ENCODE measurements at regions of chr11 and their contacts with region 1.

Region 1: DNA sequence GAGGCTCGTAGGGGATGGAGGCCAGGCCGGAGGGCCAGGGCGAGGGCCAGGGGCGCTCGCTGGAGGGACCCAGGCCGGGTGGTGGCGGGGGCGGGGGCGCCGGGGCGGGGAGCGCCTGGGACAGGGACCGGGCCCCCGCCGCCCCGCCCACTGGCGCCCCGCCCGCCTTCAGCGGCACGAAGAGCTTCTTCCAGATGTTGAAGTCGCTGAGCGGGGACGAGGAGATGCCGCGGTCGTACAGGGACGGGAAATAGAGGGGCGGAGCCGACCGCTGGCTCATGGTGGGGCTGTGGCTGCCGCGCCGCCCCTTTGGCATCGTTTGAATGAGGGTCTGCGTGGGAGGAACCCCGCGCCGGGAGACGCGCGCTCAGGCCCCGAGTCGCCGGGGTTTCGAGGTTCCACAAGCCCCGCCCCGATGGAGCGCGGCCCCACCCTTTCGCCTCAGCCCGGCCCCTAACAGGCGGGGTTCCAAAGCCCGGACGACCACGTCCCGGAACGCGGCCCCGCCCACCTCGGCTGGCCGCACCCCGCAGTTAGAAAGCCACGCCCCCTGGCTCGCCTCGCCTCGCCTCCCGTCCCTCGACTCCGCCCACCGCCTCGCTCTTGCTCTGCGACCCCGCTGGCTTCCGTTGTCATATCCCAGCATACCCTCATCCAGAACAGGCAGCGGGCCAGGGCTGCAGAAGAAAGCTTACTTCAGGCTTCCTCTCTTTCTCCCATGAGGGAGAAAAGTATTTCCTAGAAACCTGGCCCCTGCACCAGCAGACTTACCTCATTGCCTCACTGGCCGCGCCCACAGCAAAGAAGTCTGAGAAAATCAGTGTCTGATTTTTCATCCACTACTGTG is at the start of gene C11orf91:
- DNase-seq: peak; percentile 97
- CTCF ChIP-seq: no peak

Region 2: DNA sequence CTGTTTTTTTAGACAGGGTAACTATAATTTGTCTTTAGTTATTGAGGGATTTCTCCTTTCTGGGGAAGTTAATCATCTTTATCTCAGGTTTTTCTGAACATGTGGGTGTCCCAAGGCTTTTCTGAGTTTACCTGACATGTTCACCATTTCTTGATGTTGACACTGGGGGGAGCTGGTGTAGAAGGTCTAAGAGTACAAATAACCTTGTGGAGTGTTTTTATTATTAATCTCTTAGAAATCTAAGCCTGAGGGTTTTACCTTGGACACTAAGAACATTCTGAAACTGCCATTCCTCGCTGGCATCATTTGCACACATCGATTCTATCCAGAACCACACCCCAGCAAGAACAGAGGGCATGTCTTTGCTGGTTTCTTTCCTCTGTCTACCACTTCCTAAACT is 15.6 kb after region 1 on chr11:
- CTCF ChIA-PET with region 1: interaction called, 36 read pairs
- POLR2A ChIA-PET with region 1: interaction called, 4 read pairs
- DNase-seq: no peak
- CTCF ChIP-seq: peak; percentile 63